Mammary epithelial cell (primary cell): ENCODE measurements at regions of chr4 and their contacts with region 1.

Region 1: GRCh38 chr4:122577808-122578781 is 42.8 kb downstream of the IL21 start:
- DNase-seq: peak; percentile 35
- H3K4me3 ChIP-seq: no peak overlapping the region
- H3K27ac ChIP-seq: no peak overlapping the region
- H3K4me1 ChIP-seq: no peaks in the 10 kb centered on the region
- H3K27me3 ChIP-seq: no peaks in the 10 kb centered on the region
- CTCF ChIP-seq: peak; percentile 82 to 84

Region 2: DNA sequence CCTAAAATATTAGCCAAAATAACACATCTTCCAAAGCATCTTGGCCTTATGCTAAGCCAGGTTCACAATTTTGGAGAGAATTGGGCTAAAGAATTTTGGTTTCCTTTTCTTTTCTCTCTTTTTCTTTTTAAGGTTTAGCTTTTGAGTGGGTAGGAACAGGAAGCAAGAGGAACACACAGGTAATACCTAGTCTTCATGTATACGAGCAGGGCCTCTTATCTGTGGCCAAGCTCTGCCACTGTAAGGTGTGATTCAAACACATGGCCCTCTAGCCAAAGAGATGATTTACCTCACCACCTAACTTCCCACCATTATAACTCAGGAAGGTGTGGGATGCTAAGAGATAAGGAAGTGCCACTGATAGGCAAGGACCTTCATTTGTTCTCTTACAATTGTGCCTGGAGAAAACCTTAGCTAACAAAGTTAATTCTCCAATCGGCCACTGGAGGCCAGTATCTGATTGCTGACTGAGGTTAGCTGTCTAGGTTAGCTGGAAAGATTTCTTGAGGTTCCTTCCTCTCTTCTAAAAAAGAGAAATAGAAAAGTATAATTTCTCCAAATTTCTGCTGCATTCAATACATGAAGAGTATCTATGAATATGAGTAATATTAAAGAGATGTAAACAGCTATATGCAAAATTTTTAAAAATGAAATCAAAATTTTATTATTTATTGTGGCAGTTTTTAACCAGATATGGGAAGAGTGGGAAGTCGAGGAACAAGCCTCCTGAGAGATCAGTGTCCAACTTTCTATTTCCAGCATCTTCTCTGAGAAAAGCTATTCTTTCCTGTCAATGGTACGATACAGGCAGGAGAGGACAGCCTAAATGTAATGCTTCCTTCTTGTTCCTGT is 677.7 kb before region 1 on chr4:
- CTCF ChIA-PET with region 1: no interaction called
- dilution Hi-C with region 1: no loop called
- in situ Hi-C with region 1: loop called in 1 of 2 experiments (anchors 10 kb)
- intact Hi-C with region 1: loop called (anchors 1 kb)
- DNase-seq: peak; percentile 33
- H3K4me3 ChIP-seq: no peak overlapping the region
- H3K27ac ChIP-seq: no peak overlapping the region
- H3K4me1 ChIP-seq: no peaks in the 10 kb centered on the region
- H3K27me3 ChIP-seq: peaks cover 9% of the 10 kb centered on the region
- CTCF ChIP-seq: peak; percentile 64 to 81

Region 3: DNA sequence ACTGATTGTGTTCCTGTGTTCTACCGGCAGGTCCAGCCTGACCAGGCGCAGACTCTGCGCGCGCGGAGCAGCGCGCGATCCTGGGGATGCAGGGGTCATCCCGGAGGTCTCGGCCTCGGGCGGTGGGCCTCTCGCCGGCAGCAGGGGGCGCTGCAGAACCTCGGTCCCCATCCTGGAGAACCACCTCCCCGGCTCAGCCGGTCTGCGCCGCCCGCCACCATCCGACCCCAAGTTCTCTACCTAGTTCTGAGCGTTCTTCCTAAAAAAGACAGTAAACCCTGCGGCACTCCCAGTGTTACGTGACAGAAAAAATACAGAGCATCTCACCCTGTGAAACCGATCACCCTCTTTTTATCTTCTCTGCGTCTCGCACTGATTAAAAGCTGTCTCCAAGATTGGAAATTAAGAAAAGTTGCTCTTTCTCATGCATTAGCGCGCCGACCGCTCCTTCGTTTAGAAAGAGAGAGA is 627.8 kb before region 1 on chr4:
- CTCF ChIA-PET with region 1: no interaction called
- dilution Hi-C with region 1: no loop called
- in situ Hi-C with region 1: no loop called
- intact Hi-C with region 1: loop called (anchors 1 kb)
- DNase-seq: peak; percentile 16
- H3K4me3 ChIP-seq: peak overlapping the region; percentile 26 to 48 (median 36)
- H3K27ac ChIP-seq: no peak overlapping the region
- H3K4me1 ChIP-seq: peaks cover 18% of the 10 kb centered on the region
- H3K27me3 ChIP-seq: peaks cover 33% of the 10 kb centered on the region
- CTCF ChIP-seq: peak; percentile 22 to 55

Region 4: DNA sequence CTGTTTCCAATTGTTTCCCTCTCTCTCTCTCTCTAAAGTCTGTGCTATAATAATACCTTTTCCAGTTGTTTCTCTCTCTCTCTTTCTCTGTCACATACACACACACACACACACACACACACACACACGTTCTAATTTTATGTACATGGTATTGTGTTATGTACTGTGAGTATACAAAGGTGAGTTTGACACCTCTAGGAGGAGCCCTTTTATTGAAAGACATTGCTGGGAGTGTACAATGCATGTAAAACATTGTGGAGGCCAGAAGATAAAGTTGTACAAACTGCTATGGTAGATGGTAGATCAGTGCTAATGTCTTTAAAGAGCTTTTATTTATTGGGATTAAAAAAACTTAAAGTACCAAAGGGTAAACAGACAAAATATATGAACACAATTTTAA is 372.4 kb before region 1 on chr4:
- CTCF ChIA-PET with region 1: no interaction called
- dilution Hi-C with region 1: no loop called
- in situ Hi-C with region 1: no loop called
- intact Hi-C with region 1: loop called (anchors 5 kb)
- DNase-seq: no peak
- H3K4me3 ChIP-seq: no peak overlapping the region
- H3K27ac ChIP-seq: no peak overlapping the region
- H3K4me1 ChIP-seq: no peaks in the 10 kb centered on the region
- H3K27me3 ChIP-seq: no peaks in the 10 kb centered on the region
- CTCF ChIP-seq: peak; percentile 3

Region 5: GRCh38 chr4:122300776-122301175 is 277.3 kb before region 1 on chr4:
- CTCF ChIA-PET with region 1: no interaction called
- dilution Hi-C with region 1: loop called (anchors 5 kb)
- in situ Hi-C with region 1: no loop called
- intact Hi-C with region 1: no loop called
- DNase-seq: no peak
- H3K4me3 ChIP-seq: no peak overlapping the region
- H3K27ac ChIP-seq: no peak overlapping the region
- H3K4me1 ChIP-seq: no peaks in the 10 kb centered on the region
- H3K27me3 ChIP-seq: no peaks in the 10 kb centered on the region
- CTCF ChIP-seq: peak in 1 of 2 donors; percentile 17

Region 6: GRCh38 chr4:122309988-122310626 is 268.0 kb before region 1 on chr4:
- CTCF ChIA-PET with region 1: interaction called, 5 read pairs
- dilution Hi-C with region 1: no loop called
- in situ Hi-C with region 1: no loop called
- intact Hi-C with region 1: loop called (anchors 1 kb)
- DNase-seq: no peak
- H3K4me3 ChIP-seq: no peak overlapping the region
- H3K27ac ChIP-seq: no peak overlapping the region
- H3K4me1 ChIP-seq: no peaks in the 10 kb centered on the region
- H3K27me3 ChIP-seq: no peaks in the 10 kb centered on the region
- CTCF ChIP-seq: peak; percentile 43 to 53

Region 7: DNA sequence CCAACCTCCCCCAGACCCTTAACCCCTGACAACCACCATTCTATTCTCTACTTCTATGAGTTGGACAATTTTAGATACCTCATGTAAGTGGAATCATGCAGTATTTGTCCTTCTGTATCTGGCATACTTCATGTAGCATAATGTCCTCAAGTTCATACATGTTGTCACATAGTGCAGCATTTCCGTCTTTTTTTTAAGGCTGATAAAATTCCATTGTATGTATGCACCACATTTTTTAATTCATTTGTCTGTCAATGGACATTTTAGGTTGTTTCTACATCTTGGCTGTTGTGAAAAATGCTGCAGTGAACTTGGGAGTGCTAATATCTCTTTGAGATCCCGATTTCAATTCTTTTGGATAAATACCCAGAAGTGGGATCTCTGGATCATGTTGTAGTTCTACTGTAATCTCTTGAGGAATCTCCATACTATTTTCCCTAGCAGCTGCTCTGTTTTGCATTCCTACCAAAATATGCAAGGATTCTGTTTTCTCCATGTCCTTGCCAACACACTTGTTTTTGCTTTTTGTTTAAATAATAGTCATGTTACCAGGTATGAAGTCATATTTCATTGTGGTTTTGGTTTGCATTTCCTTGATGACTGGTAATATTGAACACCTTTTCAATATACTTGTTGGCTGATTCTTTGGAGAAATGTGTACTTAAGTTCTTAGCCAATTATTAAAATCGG is 248.1 kb before region 1 on chr4:
- CTCF ChIA-PET with region 1: no interaction called
- dilution Hi-C with region 1: no loop called
- in situ Hi-C with region 1: no loop called
- intact Hi-C with region 1: loop called (anchors 5 kb)
- DNase-seq: peak; percentile 56
- H3K4me3 ChIP-seq: no peak overlapping the region
- H3K27ac ChIP-seq: no peak overlapping the region
- H3K4me1 ChIP-seq: no peaks in the 10 kb centered on the region
- H3K27me3 ChIP-seq: no peaks in the 10 kb centered on the region
- CTCF ChIP-seq: no peak

Region 8: DNA sequence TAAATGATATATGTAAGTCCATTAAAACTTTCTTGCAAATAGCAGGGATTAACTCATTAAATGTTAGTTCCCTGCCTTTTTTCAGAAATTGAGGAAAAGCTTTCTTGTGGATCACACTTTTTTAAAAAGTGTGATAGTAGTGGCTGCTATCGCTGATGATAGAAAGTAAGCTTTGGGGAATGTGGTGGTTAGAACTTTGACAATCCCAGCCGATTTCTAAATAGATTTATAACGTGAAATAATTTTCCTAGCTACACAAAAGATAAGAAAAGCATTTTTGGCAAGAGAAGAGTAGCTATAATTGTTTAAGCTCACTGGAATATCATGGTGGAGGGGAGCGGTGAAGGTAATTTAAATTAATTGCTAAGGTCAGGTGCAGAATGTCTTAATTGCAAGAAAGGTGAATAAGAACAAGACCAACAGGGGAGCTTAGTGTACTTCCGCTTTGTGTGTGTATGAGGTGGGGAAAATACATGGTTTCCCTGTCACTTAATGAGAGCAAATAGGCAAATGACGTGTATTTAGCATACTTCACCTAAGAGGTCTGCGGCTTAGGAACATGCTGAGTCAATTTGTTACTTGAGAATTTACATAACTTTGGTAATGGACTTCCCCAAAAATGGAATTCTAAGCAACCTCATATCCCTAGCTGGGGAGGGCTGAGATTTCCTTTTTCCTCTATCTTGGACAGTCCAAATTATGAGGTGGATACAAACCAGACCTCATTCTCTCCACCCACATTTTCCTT is 54.5 kb after region 1 on chr4:
- CTCF ChIA-PET with region 1: no interaction called
- dilution Hi-C with region 1: no loop called
- in situ Hi-C with region 1: no loop called
- intact Hi-C with region 1: no loop called
- DNase-seq: no peak
- H3K4me3 ChIP-seq: no peak overlapping the region
- H3K27ac ChIP-seq: no peak overlapping the region
- H3K4me1 ChIP-seq: no peaks in the 10 kb centered on the region
- H3K27me3 ChIP-seq: no peaks in the 10 kb centered on the region
- CTCF ChIP-seq: no peak

Region 9: DNA sequence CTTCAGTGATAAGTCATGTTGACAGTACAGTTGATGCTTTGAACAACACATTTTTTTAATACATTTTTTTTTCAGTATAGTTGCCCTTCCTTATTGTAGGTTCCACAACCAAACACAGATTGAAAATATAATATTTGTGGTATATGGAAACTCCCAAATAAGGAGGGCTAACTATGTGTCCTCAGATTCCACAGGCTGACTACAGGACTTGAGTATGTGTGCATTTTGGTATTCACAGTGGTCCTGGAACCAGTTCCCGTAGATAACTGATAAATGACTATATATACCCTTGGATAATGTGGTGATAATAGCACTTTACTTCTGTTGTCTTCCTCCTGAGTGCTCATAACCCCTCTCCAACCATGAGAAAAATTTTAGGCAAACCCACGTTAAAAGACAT is 455.9 kb after region 1 on chr4:
- CTCF ChIA-PET with region 1: no interaction called
- dilution Hi-C with region 1: no loop called
- in situ Hi-C with region 1: no loop called
- intact Hi-C with region 1: no loop called
- DNase-seq: no peak
- H3K4me3 ChIP-seq: no peak overlapping the region
- H3K27ac ChIP-seq: no peak overlapping the region
- H3K4me1 ChIP-seq: no peaks in the 10 kb centered on the region
- H3K27me3 ChIP-seq: no peaks in the 10 kb centered on the region
- CTCF ChIP-seq: no peak